ENCODE measurements at regions of chr1 and their contacts with region 1.

Region 1: GRCh38 chr1:15617175-15617880 is at the start of gene DDI2:
- DNase-seq: peak; percentile 98
- ATAC-seq: peak; percentile 82
- H3K4me3 ChIP-seq: peak within 1 kb of the TSS; percentile 86
- H3K27ac ChIP-seq: peak within 1 kb of the TSS; percentile 76
- H3K4me1 ChIP-seq: peaks cover 33% of the 10 kb centered on the region
- H3K27me3 ChIP-seq: no peaks in the 10 kb centered on the region
- CTCF ChIP-seq: no peak
- total RNA-seq, gene DDI2: 15.0 and 22.0 TPM in 2 replicates

Region 2: GRCh38 chr1:15526490-15527339 is 90.6 kb before region 1 on chr1 and contains the start of gene DNAJC16:
- CTCF ChIA-PET with region 1: no interaction called
- POLR2A ChIA-PET with region 1: no interaction called
- intact Hi-C with region 1: loop called (anchors 2 kb)
- DNase-seq: peak; percentile 100
- ATAC-seq: peak; percentile 69
- H3K4me3 ChIP-seq: peak within 1 kb of the TSS; percentile 92
- H3K27ac ChIP-seq: peak within 1 kb of the TSS; percentile 80
- H3K4me1 ChIP-seq: peaks cover 25% of the 10 kb centered on the region
- H3K27me3 ChIP-seq: no peaks in the 10 kb centered on the region
- CTCF ChIP-seq: no peak; the same call in 1 of the 2 replicates
- total RNA-seq, gene DNAJC16: 9.2 and 11.7 TPM in 2 replicates

Region 3: DNA sequence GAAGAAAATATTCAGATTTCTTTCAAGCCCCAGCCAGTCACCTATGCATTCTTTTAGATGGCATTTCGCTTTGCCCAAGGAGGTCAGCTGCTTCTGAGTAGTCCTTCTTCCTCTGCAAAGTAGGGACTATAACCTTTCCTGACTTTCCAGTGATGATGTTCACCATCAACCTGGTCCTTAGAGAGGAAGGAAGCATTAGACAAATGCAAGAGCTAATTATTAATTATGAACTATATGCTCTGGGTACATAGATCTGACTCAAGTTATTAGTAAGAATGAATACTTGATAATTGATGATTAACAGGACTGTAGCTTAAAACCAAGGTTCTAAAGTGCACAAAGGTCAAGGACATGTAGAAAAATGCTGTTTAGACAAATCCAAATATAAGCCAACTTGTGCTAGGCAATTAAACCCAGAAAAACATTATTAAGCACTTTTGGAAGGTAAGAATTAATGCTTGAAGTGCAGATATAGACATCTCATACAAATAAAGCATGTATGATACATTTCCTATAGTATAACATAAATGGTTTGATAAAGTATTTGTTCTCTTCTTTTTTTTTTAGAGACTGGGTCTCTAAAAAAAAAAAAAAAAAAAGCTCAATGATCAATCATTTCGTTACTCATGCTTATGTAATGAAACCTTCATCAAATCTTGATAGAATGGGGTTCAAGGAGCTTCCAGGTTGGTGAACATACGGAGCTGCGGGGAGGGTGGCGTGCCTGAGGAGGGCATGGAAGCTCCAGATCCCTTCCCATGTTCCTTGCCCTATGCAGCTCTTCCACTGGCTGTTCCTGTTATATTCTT is 21.3 kb before region 1 on chr1:
- CTCF ChIA-PET with region 1: interaction called, 10 read pairs
- POLR2A ChIA-PET with region 1: no interaction called
- intact Hi-C with region 1: no loop called
- DNase-seq: no peak
- ATAC-seq: no peak
- H3K4me3 ChIP-seq: no peak overlapping the region
- H3K27ac ChIP-seq: no peak overlapping the region
- H3K4me1 ChIP-seq: 0 out of 2 replicates have a peak, but pooled peaks cover under 1% of the 10 kb centered on the region
- H3K27me3 ChIP-seq: no peaks in the 10 kb centered on the region
- CTCF ChIP-seq: no peak

Region 4: GRCh38 chr1:15603050-15603965 is 14.0 kb before region 1 on chr1:
- CTCF ChIA-PET with region 1: no interaction called
- POLR2A ChIA-PET with region 1: no interaction called
- intact Hi-C with region 1: loop called (anchors 2 kb)
- DNase-seq: peak; percentile 96
- ATAC-seq: peak; percentile 91
- H3K4me3 ChIP-seq: peak overlapping the region; percentile 90
- H3K27ac ChIP-seq: peak overlapping the region; percentile 50
- H3K4me1 ChIP-seq: peaks cover 17% of the 10 kb centered on the region
- H3K27me3 ChIP-seq: no peaks in the 10 kb centered on the region
- CTCF ChIP-seq: no peak

Measured in PC-3 (cell line).